Psoas muscle (tissue), 8 donors: ENCODE measurements at regions of chr5 and their contacts with region 1.

Region 1: DNA sequence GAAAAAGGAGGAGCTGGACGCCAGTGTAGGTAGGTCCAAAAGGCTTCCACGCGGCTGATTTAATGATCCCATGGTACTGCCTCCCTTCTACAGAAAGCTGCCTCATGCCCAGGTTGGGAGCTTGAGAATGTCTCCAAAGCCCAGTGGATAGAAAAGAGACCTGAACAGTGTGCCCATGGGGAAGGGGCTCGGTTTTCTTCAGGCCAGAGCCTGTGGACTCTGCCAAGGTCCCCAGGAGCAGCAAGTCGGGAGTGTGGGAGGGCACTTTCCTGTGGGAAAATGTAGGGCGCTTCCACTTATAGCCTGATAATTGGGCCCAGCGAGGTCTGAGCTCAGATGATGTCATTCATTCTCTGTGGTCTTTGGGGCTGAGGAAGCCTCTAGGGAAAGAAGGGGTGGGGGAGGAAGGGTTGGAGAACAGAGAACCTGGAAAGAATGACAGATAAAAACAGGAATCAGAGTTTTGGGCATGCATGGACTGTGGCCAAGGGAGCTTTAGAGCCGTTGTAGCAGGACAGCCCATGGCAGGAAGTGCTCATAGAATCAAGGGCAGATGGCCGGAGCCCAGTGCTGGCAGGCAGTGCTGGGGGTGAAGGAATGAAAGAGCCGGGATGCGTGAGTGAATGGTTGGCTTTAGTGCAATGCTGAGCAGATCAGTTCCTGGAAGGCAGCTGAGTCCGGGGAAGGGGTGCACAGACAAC is 42.5 kb upstream of the SH3PXD2B start:
- DNase-seq: peak in 1 of 2 donors; percentile 70
- ATAC-seq: peak in 3 of 4 donors; percentile 21 to 64 (median 49)
- H3K4me3 ChIP-seq: no peak overlapping the region
- H3K27ac ChIP-seq: peak overlapping the region; percentile 59
- H3K4me1 ChIP-seq: no peaks in the 10 kb centered on the region
- H3K27me3 ChIP-seq: peaks cover 0 to 6% (median 2%) of the 10 kb centered on the region in 3 donors
- CTCF ChIP-seq: no peak

Region 2: DNA sequence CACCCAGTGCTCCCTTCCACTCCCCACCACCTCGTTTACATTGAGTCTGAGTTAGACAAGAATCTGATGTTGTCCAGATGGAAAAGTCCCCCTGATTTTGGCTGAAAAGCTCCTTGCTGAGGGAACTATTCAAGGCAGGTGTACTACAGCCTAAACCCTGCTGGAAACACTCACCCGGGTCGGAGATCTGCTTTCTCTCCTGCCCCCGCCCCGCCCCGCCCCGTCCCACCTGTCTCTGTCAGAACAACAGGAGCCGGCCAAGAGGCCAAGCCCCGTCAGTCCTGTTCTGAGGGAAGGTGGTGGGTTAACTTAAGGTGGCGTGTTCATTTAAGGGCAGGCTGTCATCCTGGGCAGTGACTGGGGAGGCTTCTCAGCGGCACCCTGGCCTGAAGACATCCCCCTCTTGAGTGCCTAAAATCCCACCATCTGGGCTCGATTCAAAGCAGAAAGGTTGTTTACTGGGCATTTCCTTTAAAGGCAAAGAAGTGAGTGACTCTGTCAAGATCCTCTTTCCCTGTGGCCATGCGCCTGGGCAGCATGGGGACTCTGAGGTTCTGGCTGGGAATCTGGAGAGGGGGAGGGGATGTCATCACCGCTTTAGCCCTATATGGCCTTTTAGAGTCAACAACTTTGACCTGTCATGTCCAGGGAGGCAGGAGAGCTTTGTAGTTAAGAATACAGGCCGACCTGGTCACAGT is 73.2 kb after region 1 on chr5:
- intact Hi-C with region 1: loop called in 1 of 2 experiments (anchors 5 kb)
- DNase-seq: no peak
- ATAC-seq: peak in 1 of 4 donors; percentile 13
- H3K4me3 ChIP-seq: no peak overlapping the region
- H3K27ac ChIP-seq: no peak overlapping the region
- H3K4me1 ChIP-seq: no peaks in the 10 kb centered on the region
- H3K27me3 ChIP-seq: no peaks in the 10 kb centered on the region
- CTCF ChIP-seq: no peak